Heart left ventricle (tissue), 16 donors: ENCODE measurements at regions of chr1 and their contacts with region 1.

Region 1: DNA sequence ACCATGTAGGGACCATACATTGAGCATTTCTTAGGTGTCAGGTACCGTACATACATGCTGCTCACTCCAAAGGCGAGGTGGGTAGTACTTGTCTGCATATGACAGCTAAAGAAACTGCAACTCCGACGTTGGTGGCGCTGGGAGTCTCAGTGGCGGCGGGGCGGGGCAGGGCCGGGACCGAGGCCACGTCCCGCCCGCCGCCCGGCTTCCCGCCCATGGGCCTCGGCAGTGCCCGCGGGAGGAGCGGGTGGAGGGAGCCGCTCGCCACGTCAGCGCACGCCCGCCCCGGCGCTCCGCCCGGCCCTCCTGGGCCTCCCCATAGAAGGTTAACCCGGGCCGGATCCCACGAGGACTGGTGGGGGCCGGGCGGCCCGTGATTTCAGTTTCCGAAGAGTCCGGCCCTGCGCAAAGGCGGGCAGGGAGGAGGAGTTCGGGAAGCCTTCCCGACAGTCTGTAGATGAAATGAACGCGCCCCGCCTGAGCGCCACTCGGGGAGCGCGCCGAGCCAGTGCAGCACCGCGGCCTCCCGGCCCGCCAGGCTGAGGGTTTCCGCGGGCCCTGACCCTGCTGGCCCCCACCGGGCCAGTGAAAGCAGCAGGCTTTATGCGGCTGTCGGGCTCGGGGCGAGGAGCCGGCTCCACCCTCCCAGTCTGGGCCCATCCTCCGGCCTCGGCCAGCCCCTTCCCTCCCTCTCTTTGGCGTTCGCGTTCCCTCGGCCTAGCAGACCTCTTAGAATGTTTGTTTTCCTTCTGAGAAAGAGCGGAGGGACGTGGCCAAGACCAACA is 119.9 kb upstream of the JUN start:
- DNase-seq: peak; percentile 95 to 98 (median 97)
- ATAC-seq: peak; percentile 90 to 97 (median 96)
- H3K4me3 ChIP-seq: peak overlapping the region; percentile 11 to 69 (median 60)
- H3K27ac ChIP-seq: peak overlapping the region; percentile 95 to 99 (median 97)
- H3K4me1 ChIP-seq: peaks cover 0 to 45% (median 21%) of the 10 kb centered on the region in 12 donors
- H3K27me3 ChIP-seq: no peaks in the 10 kb centered on the region
- CTCF ChIP-seq: peak in 2 of 12 donors; percentile 7 to 33
- POLR2A ChIP-seq: peak in 1 of 2 donors; percentile 90

Region 2: DNA sequence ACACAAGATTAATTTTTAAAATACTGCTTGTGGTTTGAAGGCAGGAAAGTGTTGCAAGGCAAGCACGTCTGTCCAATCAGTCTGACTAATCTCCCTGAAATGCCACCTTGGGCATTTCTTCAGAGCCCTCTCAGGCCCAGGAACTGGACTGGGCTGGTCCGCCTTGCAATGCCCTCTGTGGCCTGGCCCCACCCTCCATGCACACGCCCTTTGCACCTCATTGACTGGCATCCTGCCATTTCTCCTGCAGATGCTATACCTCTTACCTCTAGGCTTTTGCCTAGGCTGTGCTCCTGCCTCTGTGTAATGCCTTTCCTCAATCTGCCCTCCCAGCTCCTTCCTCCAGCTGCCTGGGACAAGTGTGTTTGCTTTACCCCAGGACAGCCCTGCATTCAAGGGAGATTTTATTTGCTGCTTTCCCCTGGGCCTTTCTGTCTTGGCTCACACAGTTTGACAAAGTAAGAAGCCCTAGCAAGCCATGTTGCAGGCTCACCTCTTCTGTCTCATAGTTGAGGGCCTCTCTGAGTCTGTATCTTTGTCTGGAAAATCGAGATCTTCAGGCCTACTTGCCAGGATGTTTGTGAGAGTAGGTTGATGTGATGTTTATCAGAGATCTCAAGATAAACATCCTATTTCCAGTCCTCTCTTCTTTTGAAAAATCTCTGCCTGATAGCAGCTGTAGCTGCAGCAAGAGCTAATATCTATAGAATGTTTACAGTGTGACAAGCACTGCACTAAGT is 29.3 kb after region 1 on chr1:
- intact Hi-C with region 1: no loop called
- DNase-seq: no peak
- ATAC-seq: peak; percentile 22 to 52 (median 30)
- H3K4me3 ChIP-seq: no peak overlapping the region
- H3K27ac ChIP-seq: no peak overlapping the region
- H3K4me1 ChIP-seq: peaks cover 0 to 13% (median 0%) of the 10 kb centered on the region in 12 donors
- H3K27me3 ChIP-seq: no peaks in the 10 kb centered on the region
- CTCF ChIP-seq: no peak
- POLR2A ChIP-seq: no peak

Region 3: DNA sequence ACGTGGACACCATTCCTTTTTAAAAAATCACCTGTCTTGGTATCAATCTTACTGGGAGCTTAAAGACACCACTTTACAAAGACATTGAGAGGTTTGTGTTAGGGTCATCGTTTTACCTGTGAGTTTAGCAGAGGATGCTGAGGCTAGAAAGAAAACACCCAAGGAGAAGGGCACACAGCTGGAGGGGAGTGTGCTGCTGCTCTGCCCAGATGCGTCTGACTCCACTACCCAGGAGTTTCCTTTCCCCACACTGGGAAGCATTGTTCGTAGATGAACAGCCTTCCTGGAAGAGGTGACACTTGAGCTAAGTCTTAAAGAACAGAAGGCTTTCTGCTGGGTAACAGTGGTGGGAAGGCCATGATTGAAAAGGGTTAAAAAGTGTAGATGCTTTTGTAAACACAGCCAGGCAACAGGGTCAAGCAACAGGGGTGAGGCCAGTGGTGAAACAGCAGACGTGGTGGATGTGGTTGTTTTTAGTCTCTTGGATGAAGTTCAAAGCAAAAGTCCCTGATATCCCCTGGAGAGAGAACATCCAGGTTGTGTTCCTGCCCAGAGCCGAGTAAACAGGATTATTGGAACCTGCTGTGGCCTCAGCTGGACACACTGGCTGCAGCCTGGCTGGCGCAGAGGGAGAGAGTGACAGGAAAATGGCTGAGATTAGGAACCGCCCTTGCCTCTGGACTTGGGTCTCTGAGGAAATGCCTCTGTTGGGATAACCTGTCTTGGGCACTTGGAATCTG is 78.7 kb after region 1 on chr1:
- intact Hi-C with region 1: loop called in 1 of 10 experiments (anchors 5 kb)
- DNase-seq: peak in 4 of 5 donors; percentile 38 to 63 (median 46)
- ATAC-seq: peak; percentile 84 to 96 (median 92)
- H3K4me3 ChIP-seq: no peak overlapping the region
- H3K27ac ChIP-seq: peak overlapping the region; percentile 8 to 69 (median 54)
- H3K4me1 ChIP-seq: peaks cover 0 to 42% (median 19%) of the 10 kb centered on the region in 12 donors
- H3K27me3 ChIP-seq: no peaks in the 10 kb centered on the region
- CTCF ChIP-seq: no peak
- POLR2A ChIP-seq: no peak

Region 4: GRCh38 chr1:59057211-59057694 is 153.5 kb after region 1 on chr1:
- intact Hi-C with region 1: loop called in 3 of 10 experiments (anchors 5 to 10 kb)
- DNase-seq: peak; percentile 81 to 91 (median 84)
- ATAC-seq: peak; percentile 89 to 93 (median 91)
- H3K4me3 ChIP-seq: no peak overlapping the region
- H3K27ac ChIP-seq: peak overlapping the region; percentile 35 to 77 (median 58)
- H3K4me1 ChIP-seq: peaks cover 0 to 42% (median 26%) of the 10 kb centered on the region in 12 donors
- H3K27me3 ChIP-seq: no peaks in the 10 kb centered on the region
- CTCF ChIP-seq: peak in 3 of 12 donors; percentile 12 to 37 (median 22)
- POLR2A ChIP-seq: peak in 1 of 2 donors; percentile 57

Region 5: GRCh38 chr1:59096501-59096900 is 192.8 kb after region 1 on chr1:
- intact Hi-C with region 1: no loop called
- DNase-seq: peak in 4 of 5 donors; percentile 29 to 71 (median 59)
- ATAC-seq: peak; percentile 94 to 96 (median 94)
- H3K4me3 ChIP-seq: no peak overlapping the region
- H3K27ac ChIP-seq: peak overlapping the region in 8 of 12 donors; percentile 4 to 62 (median 24)
- H3K4me1 ChIP-seq: peaks cover 0 to 28% (median 6%) of the 10 kb centered on the region in 12 donors
- H3K27me3 ChIP-seq: no peaks in the 10 kb centered on the region
- CTCF ChIP-seq: no peak
- POLR2A ChIP-seq: no peak

Region 6: GRCh38 chr1:59150577-59151391 is 247.1 kb after region 1 on chr1:
- intact Hi-C with region 1: loop called in 5 of 10 experiments (anchors 5 to 10 kb)
- DNase-seq: peak; percentile 73 to 95 (median 78)
- ATAC-seq: peak; percentile 88 to 98 (median 96)
- H3K4me3 ChIP-seq: peak overlapping the region in 8 of 12 donors; percentile 16 to 45 (median 28)
- H3K27ac ChIP-seq: peak overlapping the region; percentile 19 to 94 (median 88)
- H3K4me1 ChIP-seq: peaks cover 0 to 49% (median 30%) of the 10 kb centered on the region in 12 donors
- H3K27me3 ChIP-seq: no peaks in the 10 kb centered on the region
- CTCF ChIP-seq: no peak
- POLR2A ChIP-seq: no peak

Region 7: GRCh38 chr1:59699227-59699847 is 795.6 kb after region 1 on chr1:
- intact Hi-C with region 1: loop called in 3 of 10 experiments (anchors 10 kb)
- DNase-seq: no peak
- ATAC-seq: peak in 1 of 4 donors; percentile 41
- H3K4me3 ChIP-seq: no peak overlapping the region
- H3K27ac ChIP-seq: peak overlapping the region in 2 of 12 donors; percentile 19 to 23
- H3K4me1 ChIP-seq: peaks cover 0 to 54% (median 17%) of the 10 kb centered on the region in 12 donors
- H3K27me3 ChIP-seq: no peaks in the 10 kb centered on the region
- CTCF ChIP-seq: peak; percentile 86 to 97 (median 94)
- POLR2A ChIP-seq: no peak

Region 8: GRCh38 chr1:59743324-59744091 is 839.8 kb after region 1 on chr1:
- intact Hi-C with region 1: loop called in 1 of 10 experiments (anchors 10 kb)
- DNase-seq: peak in 4 of 5 donors; percentile 42 to 66 (median 54)
- ATAC-seq: peak; percentile 94 to 96 (median 96)
- H3K4me3 ChIP-seq: no peak overlapping the region
- H3K27ac ChIP-seq: peak overlapping the region; percentile 65 to 89 (median 83)
- H3K4me1 ChIP-seq: peaks cover 3 to 48% (median 34%) of the 10 kb centered on the region in 12 donors
- H3K27me3 ChIP-seq: no peaks in the 10 kb centered on the region
- CTCF ChIP-seq: no peak
- POLR2A ChIP-seq: no peak